Activated T-helper 1 cell treated with anti-CD3 and anti-CD28 coated beads, Interleukin-12 subunit alpha, Interleukin-12 subunit beta, Interleukin-2, Interleukin-4 antibody, amounts not matched to agents 30 ng/mL and 10 ng/mL and 1 ng/mL, durations not matched to agents 14 hours and 24 hours and 36 hours (primary cell): ENCODE measurements at regions of chr6 and their contacts with region 1.

Region 1: GRCh38 chr6:5398530-5398929 is 137.2 kb downstream of the FARS2 start:
- DNase-seq: no peak
- H3K4me3 Mint-ChIP-seq: no peak overlapping the region
- H3K27ac Mint-ChIP-seq: no peak overlapping the region
- H3K4me1 Mint-ChIP-seq: no peaks in the 10 kb centered on the region
- H3K27me3 Mint-ChIP-seq: no peaks in the 10 kb centered on the region

Region 2: GRCh38 chr6:4987432-4987831 is 411.1 kb before region 1 on chr6:
- intact Hi-C with region 1: no loop called
- DNase-seq: no peak
- H3K4me3 Mint-ChIP-seq: no peak overlapping the region
- H3K27ac Mint-ChIP-seq: no peak overlapping the region
- H3K4me1 Mint-ChIP-seq: no peaks in the 10 kb centered on the region
- H3K27me3 Mint-ChIP-seq: no peaks in the 10 kb centered on the region

Region 3: GRCh38 chr6:5143634-5144311 is 254.8 kb before region 1 on chr6:
- intact Hi-C with region 1: loop called (anchors 1 kb)
- DNase-seq: peak; percentile 68
- H3K4me3 Mint-ChIP-seq: no peak overlapping the region
- H3K27ac Mint-ChIP-seq: no peak overlapping the region
- H3K4me1 Mint-ChIP-seq: peaks cover 10% of the 10 kb centered on the region
- H3K27me3 Mint-ChIP-seq: no peaks in the 10 kb centered on the region

Region 4: GRCh38 chr6:5199283-5199682 is 199.2 kb before region 1 on chr6:
- intact Hi-C with region 1: loop called (anchors 1 kb)
- DNase-seq: no peak
- H3K4me3 Mint-ChIP-seq: no peak overlapping the region
- H3K27ac Mint-ChIP-seq: peak overlapping the region; percentile 49
- H3K4me1 Mint-ChIP-seq: peaks cover 9% of the 10 kb centered on the region
- H3K27me3 Mint-ChIP-seq: no peaks in the 10 kb centered on the region

Region 5: DNA sequence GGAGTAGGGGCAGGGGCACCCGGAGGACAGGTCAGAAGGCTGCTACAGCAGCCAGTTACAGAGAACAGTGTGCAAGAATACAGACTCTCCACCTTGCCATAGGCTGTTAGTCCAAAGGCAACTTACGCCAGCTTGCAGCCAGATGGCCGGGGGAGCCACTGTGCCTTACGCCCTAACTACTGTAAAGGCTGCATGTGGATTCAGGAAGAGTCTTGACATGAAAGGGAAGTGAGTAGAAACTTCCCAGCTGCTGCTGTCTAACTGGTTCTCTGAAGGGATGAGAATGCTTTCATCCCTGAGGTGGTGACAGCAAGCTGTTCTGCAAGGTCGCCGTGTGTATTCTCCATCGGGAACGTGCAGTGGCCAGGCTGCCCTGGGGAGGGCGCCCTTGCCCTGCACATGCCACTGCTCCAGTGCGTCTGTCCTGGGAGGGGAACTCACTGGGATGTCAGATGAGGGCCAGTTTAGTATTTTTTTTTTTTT is 183.9 kb before region 1 on chr6:
- intact Hi-C with region 1: loop called (anchors 1 kb)
- DNase-seq: no peak
- H3K4me3 Mint-ChIP-seq: no peak overlapping the region
- H3K27ac Mint-ChIP-seq: no peak overlapping the region
- H3K4me1 Mint-ChIP-seq: peaks cover 14% of the 10 kb centered on the region
- H3K27me3 Mint-ChIP-seq: no peaks in the 10 kb centered on the region

Region 6: DNA sequence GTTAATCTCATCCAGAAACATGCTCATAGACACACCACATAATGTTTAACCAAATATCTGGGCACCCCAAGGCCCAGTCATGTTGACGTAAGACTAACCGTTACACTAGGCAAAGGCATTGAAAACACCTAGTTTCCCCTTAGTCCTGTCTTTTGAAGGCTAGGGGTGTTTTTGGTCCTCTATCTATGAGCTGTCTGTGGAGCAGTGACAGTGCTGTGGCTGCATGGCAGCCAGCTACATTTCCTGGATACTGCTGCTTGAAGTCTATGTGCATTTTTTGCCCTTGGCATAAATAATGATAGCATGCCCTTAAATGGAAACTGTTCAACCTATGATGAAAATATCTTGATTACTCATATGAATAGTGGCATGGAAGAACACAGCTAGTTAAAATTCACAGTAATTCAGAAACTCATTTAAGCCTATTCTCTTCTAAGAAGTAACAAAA is 118.6 kb before region 1 on chr6:
- intact Hi-C with region 1: loop called (anchors 1 kb)
- DNase-seq: peak; percentile 10
- H3K4me3 Mint-ChIP-seq: peak overlapping the region; percentile 13
- H3K27ac Mint-ChIP-seq: peak overlapping the region; percentile 84
- H3K4me1 Mint-ChIP-seq: peaks cover 49% of the 10 kb centered on the region
- H3K27me3 Mint-ChIP-seq: peaks cover 2% of the 10 kb centered on the region

Region 7: GRCh38 chr6:5333658-5334057 is 64.9 kb before region 1 on chr6:
- intact Hi-C with region 1: no loop called
- DNase-seq: no peak
- H3K4me3 Mint-ChIP-seq: no peak overlapping the region
- H3K27ac Mint-ChIP-seq: no peak overlapping the region
- H3K4me1 Mint-ChIP-seq: peaks cover 8% of the 10 kb centered on the region
- H3K27me3 Mint-ChIP-seq: no peaks in the 10 kb centered on the region

Region 8: GRCh38 chr6:6008648-6009421 is 610.3 kb after region 1 on chr6:
- intact Hi-C with region 1: no loop called
- DNase-seq: peak; percentile 54
- H3K4me3 Mint-ChIP-seq: peak overlapping the region; percentile 81
- H3K27ac Mint-ChIP-seq: peak overlapping the region; percentile 40
- H3K4me1 Mint-ChIP-seq: peaks cover 38% of the 10 kb centered on the region
- H3K27me3 Mint-ChIP-seq: peaks cover 70% of the 10 kb centered on the region